ENCODE measurements at regions of chr14 and their contacts with region 1.

Region 1: GRCh38 chr14:54366736-54367735 is 29.8 kb upstream of the CDKN3 start:
- DNase-seq: peak; percentile 65
- H3K4me3 ChIP-seq: no peak overlapping the region
- H3K27ac ChIP-seq: no peak overlapping the region
- H3K4me1 ChIP-seq: no peaks in the 10 kb centered on the region
- CTCF ChIP-seq: peak; percentile 80

Region 2: GRCh38 chr14:54169254-54169924 is 197.6 kb before region 1 on chr14:
- CTCF ChIA-PET with region 1: no interaction called
- POLR2A ChIA-PET with region 1: no interaction called
- intact Hi-C with region 1: no loop called
- DNase-seq: no peak
- H3K4me3 ChIP-seq: no peak overlapping the region
- H3K27ac ChIP-seq: no peak overlapping the region
- H3K4me1 ChIP-seq: no peaks in the 10 kb centered on the region
- CTCF ChIP-seq: no peak

Region 3: DNA sequence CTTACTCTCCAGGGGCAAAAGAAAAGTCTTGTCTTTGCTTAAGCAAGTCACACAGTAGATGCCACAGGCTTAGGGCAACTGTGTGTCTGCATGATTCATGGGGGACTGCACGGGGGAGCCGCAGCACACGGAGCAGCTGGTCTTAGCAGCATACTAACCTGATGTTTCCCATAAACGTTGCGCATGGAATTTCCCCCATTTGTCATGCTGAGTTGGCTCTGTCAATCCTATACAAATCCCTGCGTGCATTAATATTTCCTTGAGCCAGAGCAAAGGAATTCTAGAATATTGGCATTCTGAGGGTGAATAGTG is 271.1 kb after region 1 on chr14:
- CTCF ChIA-PET with region 1: no interaction called
- POLR2A ChIA-PET with region 1: no interaction called
- intact Hi-C with region 1: no loop called
- DNase-seq: no peak
- H3K4me3 ChIP-seq: no peak overlapping the region
- H3K27ac ChIP-seq: no peak overlapping the region
- H3K4me1 ChIP-seq: no peaks in the 10 kb centered on the region
- CTCF ChIP-seq: no peak

Region 4: GRCh38 chr14:54773171-54773975 is 406.3 kb after region 1 on chr14:
- CTCF ChIA-PET with region 1: no interaction called
- POLR2A ChIA-PET with region 1: interaction called, 8 read pairs
- intact Hi-C with region 1: loop called (anchors 10 kb)
- DNase-seq: peak; percentile 37
- H3K4me3 ChIP-seq: no peak overlapping the region
- H3K27ac ChIP-seq: no peak overlapping the region
- H3K4me1 ChIP-seq: peaks cover 9% of the 10 kb centered on the region
- CTCF ChIP-seq: peak; percentile 40; the same call in 1 of the 2 replicates

Measured in OCI-LY7 (cell line).